ENCODE measurements at regions of chr14 and their contacts with region 1.

Region 1: GRCh38 chr14:58501214-58501816 is 73.8 kb downstream of the KIAA0586 start:
- DNase-seq: peak; percentile 22
- H3K4me3 ChIP-seq: no peak overlapping the region
- H3K27ac ChIP-seq: no peak overlapping the region
- H3K4me1 ChIP-seq: no peaks in the 10 kb centered on the region
- H3K27me3 ChIP-seq: no peaks in the 10 kb centered on the region
- CTCF ChIP-seq: peak; percentile 77

Region 2: DNA sequence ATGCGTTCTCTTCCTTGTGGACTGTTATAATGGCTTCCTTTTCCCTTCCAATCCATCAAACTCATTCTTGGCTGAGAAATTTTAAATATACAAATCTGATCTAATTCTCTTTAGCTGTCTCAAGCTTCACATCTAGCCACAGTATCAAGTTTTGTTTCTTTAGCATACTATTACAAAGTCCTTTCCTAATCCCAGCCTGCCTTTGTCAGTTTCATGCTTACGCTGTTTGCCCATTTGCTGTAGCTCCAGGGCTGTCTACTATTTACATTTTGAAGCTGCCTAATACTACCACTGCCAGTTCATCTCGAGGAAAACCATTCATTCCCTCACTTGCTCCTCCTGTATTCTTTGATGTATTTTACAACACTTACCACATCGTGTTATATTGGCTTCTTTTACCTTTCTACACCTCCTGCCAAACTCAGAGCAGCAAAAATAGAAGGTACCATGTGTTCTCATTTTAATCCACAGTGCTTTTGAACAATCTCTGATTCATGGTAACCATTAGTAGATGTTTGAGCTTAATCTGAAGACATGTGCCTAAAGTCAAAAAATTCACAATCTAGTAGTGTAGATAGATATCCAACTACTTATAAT is 160.1 kb before region 1 on chr14:
- intact Hi-C with region 1: no loop called
- DNase-seq: no peak
- H3K4me3 ChIP-seq: no peak overlapping the region
- H3K27ac ChIP-seq: no peak overlapping the region
- H3K4me1 ChIP-seq: no peaks in the 10 kb centered on the region
- H3K27me3 ChIP-seq: no peaks in the 10 kb centered on the region
- CTCF ChIP-seq: no peak

Region 3: GRCh38 chr14:58408681-58409215 is 92.6 kb before region 1 on chr14:
- intact Hi-C with region 1: no loop called
- DNase-seq: no peak
- H3K4me3 ChIP-seq: no peak overlapping the region
- H3K27ac ChIP-seq: no peak overlapping the region
- H3K4me1 ChIP-seq: no peaks in the 10 kb centered on the region
- H3K27me3 ChIP-seq: no peaks in the 10 kb centered on the region
- CTCF ChIP-seq: no peak

Region 4: GRCh38 chr14:58637391-58638230 is 136.3 kb after region 1 on chr14 and contains the start of gene DACT1:
- intact Hi-C with region 1: loop called (anchors 5 kb)
- DNase-seq: peak; percentile 59
- H3K4me3 ChIP-seq: peak within 1 kb of the TSS; percentile 81
- H3K27ac ChIP-seq: peak within 1 kb of the TSS; percentile 77
- H3K4me1 ChIP-seq: no peaks in the 10 kb centered on the region
- H3K27me3 ChIP-seq: peaks cover 16% of the 10 kb centered on the region
- CTCF ChIP-seq: no peak
- total RNA-seq, gene DACT1: 1.5 to 4.9 TPM

Region 5: DNA sequence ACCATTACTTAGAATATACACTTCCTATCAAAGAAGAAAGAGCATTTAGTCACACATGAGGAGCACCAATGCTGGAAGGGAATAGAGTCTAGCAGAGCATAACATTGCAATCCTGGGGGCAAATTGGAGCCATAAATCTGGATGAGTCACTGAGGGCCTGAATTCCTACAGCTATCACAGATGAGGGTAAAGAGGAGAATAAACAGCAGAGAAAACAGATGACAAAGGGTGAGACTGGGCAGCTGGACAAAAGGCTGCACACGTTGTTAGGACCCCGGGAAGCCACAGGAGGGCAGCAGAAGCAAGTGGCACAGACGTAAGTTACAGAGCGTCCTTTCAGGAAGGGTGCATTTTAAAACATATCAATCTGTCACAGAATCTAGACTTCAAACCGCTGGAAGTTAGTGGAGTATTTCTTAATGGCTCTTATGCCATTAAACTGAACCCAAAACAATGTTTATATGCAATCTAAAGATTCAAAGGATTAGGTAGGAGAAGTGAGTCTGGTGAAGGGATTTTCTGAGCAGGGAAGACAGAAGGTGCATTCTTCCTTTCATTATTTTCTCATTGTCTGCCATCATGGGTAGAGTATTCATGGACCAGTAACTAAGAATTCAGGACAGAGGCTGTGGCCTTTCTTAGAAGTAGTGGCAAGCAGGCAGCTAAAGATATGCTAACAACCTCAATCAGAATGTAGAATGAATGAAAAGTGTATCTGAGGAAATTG is 527.3 kb after region 1 on chr14:
- intact Hi-C with region 1: loop called (anchors 10 kb)
- DNase-seq: peak; percentile 66
- H3K4me3 ChIP-seq: no peak overlapping the region
- H3K27ac ChIP-seq: no peak overlapping the region
- H3K4me1 ChIP-seq: no peaks in the 10 kb centered on the region
- H3K27me3 ChIP-seq: no peaks in the 10 kb centered on the region
- CTCF ChIP-seq: peak; percentile 70

Region 6: GRCh38 chr14:59055439-59056045 is 554.2 kb after region 1 on chr14:
- intact Hi-C with region 1: loop called (anchors 5 kb)
- DNase-seq: peak; percentile 37
- H3K4me3 ChIP-seq: no peak overlapping the region
- H3K27ac ChIP-seq: no peak overlapping the region
- H3K4me1 ChIP-seq: no peaks in the 10 kb centered on the region
- H3K27me3 ChIP-seq: no peaks in the 10 kb centered on the region
- CTCF ChIP-seq: peak; percentile 70

Region 7: GRCh38 chr14:59126710-59127432 is 625.6 kb after region 1 on chr14:
- intact Hi-C with region 1: loop called (anchors 5 kb)
- DNase-seq: no peak
- H3K4me3 ChIP-seq: no peak overlapping the region
- H3K27ac ChIP-seq: no peak overlapping the region
- H3K4me1 ChIP-seq: no peaks in the 10 kb centered on the region
- H3K27me3 ChIP-seq: no peaks in the 10 kb centered on the region
- CTCF ChIP-seq: peak; percentile 73